CD14-positive monocyte (primary cell): ENCODE measurements at regions of chr3 and their contacts with region 1.

Region 1: GRCh38 chr3:9452417-9452816 is 55.0 kb downstream of the SETD5 start:
- DNase-seq: no peak
- H3K4me3 ChIP-seq: no peak overlapping the region
- H3K4me3 Mint-ChIP-seq: no peak overlapping the region
- H3K27ac ChIP-seq: peak overlapping the region in 1 of 2 donors; percentile 62
- H3K27ac Mint-ChIP-seq: peak overlapping the region in 4 of 7 donors; percentile 65 to 85 (median 74)
- H3K4me1 ChIP-seq: no peaks in the 10 kb centered on the region
- H3K4me1 Mint-ChIP-seq: peaks cover 2% of the 10 kb centered on the region
- H3K27me3 ChIP-seq: no peaks in the 10 kb centered on the region
- H3K27me3 Mint-ChIP-seq: peaks cover 0 to 1% (median 0%) of the 10 kb centered on the region in 3 donors
- CTCF ChIP-seq: no peak

Region 2: DNA sequence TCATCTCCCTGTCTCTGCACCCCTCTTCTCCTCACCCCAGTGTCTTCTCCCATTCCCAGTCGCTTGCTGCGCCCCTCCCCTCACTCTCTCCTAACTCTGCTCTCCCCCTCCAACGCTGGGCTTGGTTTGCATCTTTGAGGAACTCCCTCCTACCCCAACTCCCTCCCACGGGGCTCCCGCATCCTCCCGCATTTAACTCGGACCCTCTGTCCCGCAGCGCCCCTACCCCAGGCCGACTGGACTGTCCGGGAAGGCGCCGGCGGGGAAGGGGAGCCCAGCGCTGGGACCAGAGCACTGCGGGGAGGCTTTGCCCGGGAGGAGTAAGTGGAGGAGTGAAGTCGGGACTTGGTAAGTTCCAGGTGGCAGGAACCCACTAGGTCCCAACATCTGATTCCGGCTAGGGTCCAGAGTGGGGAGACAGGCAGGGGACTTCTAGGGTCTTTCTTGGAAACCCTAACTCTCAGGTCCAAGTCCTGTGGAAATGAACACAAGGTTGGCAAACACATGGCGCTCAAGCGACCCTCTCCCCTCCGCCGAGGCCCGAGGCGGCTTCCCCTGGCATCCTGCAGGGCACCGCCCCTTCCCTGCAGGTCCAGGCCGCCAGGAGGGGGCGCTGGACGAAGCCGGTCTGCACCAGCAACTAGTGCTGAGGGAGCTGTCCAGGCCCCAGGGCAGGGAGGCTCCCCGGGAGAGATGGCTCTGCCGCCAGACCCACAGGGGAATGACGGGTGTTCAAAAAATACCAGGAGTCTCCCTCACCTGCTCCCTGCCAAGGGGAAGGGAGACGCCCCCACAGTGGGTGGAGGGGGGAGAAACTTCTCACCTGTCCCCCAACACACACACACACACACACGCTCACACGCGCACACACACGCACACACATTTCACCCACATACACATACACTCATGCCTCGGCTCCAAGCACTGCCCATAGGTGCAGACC is 48.0 kb after region 1 on chr3:
- intact Hi-C with region 1: no loop called
- DNase-seq: peak; percentile 21 to 39 (median 23)
- H3K4me3 ChIP-seq: no peak overlapping the region
- H3K4me3 Mint-ChIP-seq: peak overlapping the region in 1 of 2 donors; percentile 73
- H3K27ac ChIP-seq: no peak overlapping the region
- H3K27ac Mint-ChIP-seq: peak overlapping the region in 2 of 7 donors; percentile 54 to 67
- H3K4me1 ChIP-seq: no peaks in the 10 kb centered on the region
- H3K4me1 Mint-ChIP-seq: peaks cover 2% of the 10 kb centered on the region
- H3K27me3 ChIP-seq: peaks cover 9 to 34% of the 10 kb centered on the region in 2 donors
- H3K27me3 Mint-ChIP-seq: peaks cover 39 to 45% (median 43%) of the 10 kb centered on the region in 3 donors
- CTCF ChIP-seq: peak; percentile 84

Region 3: DNA sequence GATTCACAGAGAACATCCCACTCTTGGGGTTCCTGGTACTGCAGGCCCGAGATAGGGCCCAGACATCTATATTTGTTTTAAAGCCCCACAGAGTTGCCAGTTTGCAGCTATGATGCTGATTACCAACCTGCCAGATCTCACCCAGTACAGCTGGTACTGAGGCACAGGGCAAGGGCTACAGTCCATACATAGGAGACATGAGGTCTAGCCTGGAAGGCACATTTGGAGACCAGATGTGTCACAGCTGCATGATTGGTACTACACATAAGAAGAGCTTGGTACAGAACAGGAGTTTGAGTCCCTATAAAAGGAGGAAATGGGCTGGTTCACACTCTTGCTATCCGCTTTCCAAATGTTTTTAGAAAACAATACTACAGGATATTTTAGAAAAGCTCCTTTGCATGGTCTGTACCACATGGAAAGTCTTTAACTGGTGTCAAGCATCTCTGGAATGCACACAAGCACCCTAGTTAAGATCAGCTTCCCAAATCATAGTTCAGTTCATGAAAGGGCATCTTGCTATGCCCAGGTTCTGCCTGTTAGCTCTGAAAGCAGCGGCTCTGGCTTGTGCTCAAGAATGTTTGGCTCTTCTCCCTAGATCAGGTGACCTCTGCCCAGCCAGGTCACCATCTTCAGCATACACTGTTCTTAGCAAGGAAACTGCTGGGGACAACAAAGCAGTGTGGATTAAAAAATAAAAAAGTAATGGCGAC is 217.5 kb after region 1 on chr3:
- intact Hi-C with region 1: loop called in 1 of 2 experiments (anchors 10 kb)
- DNase-seq: no peak
- H3K4me3 ChIP-seq: no peak overlapping the region
- H3K4me3 Mint-ChIP-seq: no peak overlapping the region
- H3K27ac ChIP-seq: peak overlapping the region in 1 of 2 donors; percentile 12
- H3K27ac Mint-ChIP-seq: peak overlapping the region in 2 of 7 donors; percentile 32 to 61
- H3K4me1 ChIP-seq: no peaks in the 10 kb centered on the region
- H3K4me1 Mint-ChIP-seq: no peaks in the 10 kb centered on the region
- H3K27me3 ChIP-seq: no peaks in the 10 kb centered on the region
- H3K27me3 Mint-ChIP-seq: no peaks in the 10 kb centered on the region
- CTCF ChIP-seq: no peak